ENCODE measurements at regions of chr1 and their contacts with region 1.

Region 1: DNA sequence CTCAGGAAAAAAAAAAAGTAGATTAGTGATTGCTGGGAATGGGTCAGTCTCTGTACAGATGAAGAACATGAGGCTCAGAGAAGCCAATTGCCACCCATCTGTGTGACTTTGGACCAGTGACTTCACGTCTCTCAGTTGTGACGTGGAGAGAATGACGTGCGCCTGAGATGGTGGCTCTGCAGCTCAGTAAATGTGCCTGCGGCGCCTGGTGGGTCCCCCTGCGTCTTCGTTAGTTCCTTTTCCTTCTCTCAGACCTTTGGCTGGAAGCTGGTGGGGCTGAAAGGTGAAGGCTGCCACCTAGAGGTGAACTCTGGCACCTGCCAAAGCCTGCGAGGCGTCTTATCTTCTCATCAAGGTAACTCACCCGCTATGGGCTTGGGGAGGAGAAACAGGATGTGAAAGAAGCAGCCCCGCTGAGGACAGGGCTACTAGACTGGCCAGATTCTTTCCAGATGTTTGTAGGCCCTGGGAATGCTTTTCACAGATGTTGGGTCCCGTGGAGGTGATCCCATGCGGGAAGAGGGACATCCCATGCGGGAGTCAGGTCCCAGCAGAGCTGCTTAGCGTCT is 8.7 kb upstream of the E2F2 start:
- DNase-seq: no peak
- H3K4me3 ChIP-seq: no peak overlapping the region
- H3K27ac ChIP-seq: peak overlapping the region; percentile 5
- H3K4me1 ChIP-seq: peaks cover 8% of the 10 kb centered on the region
- H3K27me3 ChIP-seq: no peaks in the 10 kb centered on the region
- CTCF ChIP-seq: peak; percentile 87 to 88 (median 88)
- POLR2A ChIP-seq: no peak

Region 2: GRCh38 chr1:23422241-23423030 is 117.3 kb before region 1 on chr1:
- intact Hi-C with region 1: no loop called
- DNase-seq: no peak
- H3K4me3 ChIP-seq: peak overlapping the region; percentile 10 to 27
- H3K27ac ChIP-seq: peak overlapping the region; percentile 79
- H3K4me1 ChIP-seq: peaks cover 46% of the 10 kb centered on the region
- H3K27me3 ChIP-seq: no peaks in the 10 kb centered on the region
- CTCF ChIP-seq: no peak
- POLR2A ChIP-seq: no peak

Region 3: GRCh38 chr1:23452011-23452411 is 87.8 kb before region 1 on chr1:
- intact Hi-C with region 1: no loop called
- DNase-seq: no peak
- H3K4me3 ChIP-seq: no peak overlapping the region
- H3K27ac ChIP-seq: peak overlapping the region; percentile 74
- H3K4me1 ChIP-seq: peaks cover 60% of the 10 kb centered on the region
- H3K27me3 ChIP-seq: no peaks in the 10 kb centered on the region
- CTCF ChIP-seq: no peak
- POLR2A ChIP-seq: no peak

Region 4: DNA sequence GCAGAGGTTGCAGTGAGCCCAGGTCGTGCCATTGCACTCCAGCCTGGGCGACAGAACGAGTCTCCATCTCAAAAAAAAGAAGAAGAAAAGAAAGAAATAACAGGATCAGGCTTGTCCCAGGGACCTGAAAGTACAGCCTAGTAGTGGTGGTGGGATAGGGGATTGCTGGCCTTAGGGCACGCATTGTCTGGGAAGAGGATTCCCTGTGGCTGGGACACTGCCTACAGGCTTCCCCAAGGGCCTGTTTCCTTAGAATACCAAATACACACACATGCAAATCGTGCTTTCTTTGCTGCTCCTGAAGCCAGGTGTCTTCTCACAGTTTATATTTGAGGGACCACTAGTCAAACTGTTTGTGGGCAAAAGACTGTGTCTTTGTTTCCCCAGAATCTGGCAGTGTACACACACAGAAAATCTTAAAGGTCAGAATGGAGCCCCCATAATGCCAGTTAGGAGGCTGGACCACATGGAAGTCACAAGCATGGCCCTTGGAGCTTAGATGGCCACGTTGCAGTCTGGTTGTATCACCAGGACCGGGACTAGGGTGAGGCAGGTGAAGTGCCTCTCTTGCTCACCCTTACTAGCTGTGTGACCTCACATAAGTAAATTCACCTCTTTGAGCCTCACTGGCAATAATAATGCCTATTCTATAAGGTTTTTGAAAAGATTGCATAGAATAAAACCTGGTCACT is 43.1 kb before region 1 on chr1:
- intact Hi-C with region 1: loop called (anchors 5 kb)
- DNase-seq: no peak
- H3K4me3 ChIP-seq: no peak overlapping the region
- H3K27ac ChIP-seq: no peak overlapping the region
- H3K4me1 ChIP-seq: no peaks in the 10 kb centered on the region
- H3K27me3 ChIP-seq: no peaks in the 10 kb centered on the region
- CTCF ChIP-seq: no peak
- POLR2A ChIP-seq: no peak

Region 5: DNA sequence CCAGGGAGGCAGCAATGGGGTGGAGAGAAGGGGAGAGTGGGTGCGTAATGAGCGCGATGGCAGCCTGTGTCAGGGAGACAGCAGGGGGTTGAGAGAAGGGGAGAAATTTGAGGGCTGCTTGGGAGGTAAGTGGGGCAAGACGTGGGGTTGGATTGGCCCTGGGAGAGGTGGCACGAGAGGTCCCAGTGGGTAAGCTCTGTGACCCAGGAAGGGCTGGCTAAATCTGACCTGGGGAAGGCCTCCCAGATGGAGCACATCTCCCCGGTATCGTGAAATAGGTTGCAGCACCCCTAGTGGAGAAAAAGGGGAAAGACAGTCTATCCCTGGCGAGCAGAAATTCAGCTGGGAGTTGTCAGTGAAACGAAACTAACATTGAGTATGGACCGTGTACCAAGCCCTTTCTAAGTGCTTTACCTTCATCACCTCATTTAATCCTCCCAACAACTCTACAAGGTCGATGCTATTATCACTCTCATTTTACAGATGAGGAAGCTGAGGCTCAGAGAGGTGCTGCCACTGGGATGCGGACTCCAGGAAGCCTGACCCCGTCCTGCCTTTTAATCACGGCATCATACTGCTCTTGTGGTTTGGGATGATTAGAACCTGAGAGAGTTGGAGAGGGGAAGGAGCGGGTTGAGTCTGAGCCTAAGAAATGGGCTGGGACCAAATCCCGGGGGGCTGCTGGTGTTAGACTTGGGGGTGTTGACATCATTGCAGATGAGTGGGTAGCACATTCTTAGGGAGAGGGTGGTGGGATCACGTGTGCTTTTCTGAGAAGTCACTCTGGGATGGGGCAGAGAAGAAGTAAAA is 95.3 kb after region 1 on chr1:
- intact Hi-C with region 1: loop called (anchors 5 kb)
- DNase-seq: no peak
- H3K4me3 ChIP-seq: peak overlapping the region; percentile 36 to 41
- H3K27ac ChIP-seq: peak overlapping the region; percentile 73
- H3K4me1 ChIP-seq: peaks cover 11% of the 10 kb centered on the region
- H3K27me3 ChIP-seq: no peaks in the 10 kb centered on the region
- CTCF ChIP-seq: peak; percentile 66 to 85 (median 85)
- POLR2A ChIP-seq: no peak

Measured in vagina (tissue), 2 donors.